ENCODE measurements at regions of chr6 and their contacts with region 1.

Region 1: DNA sequence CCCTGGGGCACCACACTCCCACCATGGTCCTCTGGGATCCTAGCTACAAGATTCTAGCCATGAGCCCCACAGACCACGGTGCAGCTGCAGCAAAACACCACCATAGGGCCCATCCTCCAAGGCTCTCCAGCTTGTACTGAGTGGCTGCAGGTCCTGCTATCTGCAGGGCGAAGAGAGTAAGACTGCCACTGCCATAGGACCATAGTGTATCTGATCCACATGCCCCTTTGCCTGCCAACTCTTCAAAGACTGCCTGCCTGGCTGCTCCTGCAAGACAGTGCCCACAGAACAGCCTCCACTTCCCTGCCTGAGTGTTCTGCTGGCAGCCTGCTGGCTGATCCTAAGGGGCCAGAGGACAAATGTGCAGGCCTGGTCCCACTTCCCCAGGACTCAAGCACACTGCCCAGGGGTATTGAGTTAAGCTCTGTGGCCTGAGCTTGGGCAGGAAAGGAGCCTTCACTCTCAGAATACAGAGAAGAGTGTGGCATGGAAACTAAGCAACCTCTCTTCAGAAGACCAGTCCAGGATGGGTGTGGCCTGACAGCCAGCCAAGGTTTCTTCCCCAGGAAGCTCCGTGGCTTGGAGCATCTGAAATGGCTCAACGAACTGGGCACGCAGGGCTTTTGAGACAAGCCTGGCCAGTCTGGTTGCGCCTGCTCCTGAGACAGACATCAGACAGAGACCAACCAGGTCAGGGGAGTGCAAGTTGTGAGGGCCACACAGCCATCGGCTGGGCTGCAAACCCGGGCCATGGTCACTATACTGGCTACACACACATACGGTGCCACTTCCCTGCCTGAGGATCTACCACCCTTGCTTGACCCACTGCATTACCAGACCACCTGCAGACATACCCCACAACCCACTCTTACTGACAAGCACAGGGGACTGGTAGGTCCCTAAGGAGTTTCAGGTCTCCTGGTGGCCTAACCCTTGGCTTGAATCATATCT is 54.5 kb downstream of the RNGTT start:
- DNase-seq: no peak
- H3K4me3 ChIP-seq: no peak overlapping the region
- H3K27ac ChIP-seq: no peak overlapping the region
- H3K4me1 ChIP-seq: no peaks in the 10 kb centered on the region
- H3K27me3 ChIP-seq: no peaks in the 10 kb centered on the region
- CTCF ChIP-seq: no peak

Region 2: DNA sequence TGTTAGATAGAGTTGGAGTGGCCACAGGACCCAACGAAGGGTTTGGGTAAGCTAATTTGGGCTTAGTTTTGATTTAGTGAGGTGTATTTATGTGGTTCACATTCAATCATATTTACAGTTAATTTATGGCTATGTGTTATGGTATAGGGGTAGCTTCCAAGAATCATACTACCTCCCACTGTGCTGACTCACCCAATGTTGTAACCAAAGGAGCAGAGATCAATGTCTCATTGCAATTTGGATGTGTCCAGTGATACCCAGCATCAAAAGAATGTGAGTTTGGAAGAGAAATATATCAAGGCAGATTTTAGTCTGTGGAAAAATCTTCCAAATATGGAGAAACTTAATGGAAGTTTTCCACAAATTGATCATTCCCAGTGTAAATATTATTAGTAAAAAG is 1611.8 kb before region 1 on chr6:
- CTCF ChIA-PET with region 1: no interaction called
- POLR2A ChIA-PET with region 1: interaction called, 13 read pairs
- intact Hi-C with region 1: no loop called
- DNase-seq: no peak
- H3K4me3 ChIP-seq: no peak overlapping the region
- H3K27ac ChIP-seq: no peak overlapping the region
- H3K4me1 ChIP-seq: no peaks in the 10 kb centered on the region
- H3K27me3 ChIP-seq: no peaks in the 10 kb centered on the region
- CTCF ChIP-seq: no peak

Region 3: GRCh38 chr6:88848870-88849269 is 60.0 kb before region 1 on chr6:
- CTCF ChIA-PET with region 1: no interaction called
- POLR2A ChIA-PET with region 1: no interaction called
- intact Hi-C with region 1: no loop called
- DNase-seq: no peak
- H3K4me3 ChIP-seq: no peak overlapping the region
- H3K27ac ChIP-seq: no peak overlapping the region
- H3K4me1 ChIP-seq: no peaks in the 10 kb centered on the region
- H3K27me3 ChIP-seq: no peaks in the 10 kb centered on the region
- CTCF ChIP-seq: no peak